K562 (cell line): ENCODE measurements at regions of chr1 and their contacts with region 1.

Region 1: DNA sequence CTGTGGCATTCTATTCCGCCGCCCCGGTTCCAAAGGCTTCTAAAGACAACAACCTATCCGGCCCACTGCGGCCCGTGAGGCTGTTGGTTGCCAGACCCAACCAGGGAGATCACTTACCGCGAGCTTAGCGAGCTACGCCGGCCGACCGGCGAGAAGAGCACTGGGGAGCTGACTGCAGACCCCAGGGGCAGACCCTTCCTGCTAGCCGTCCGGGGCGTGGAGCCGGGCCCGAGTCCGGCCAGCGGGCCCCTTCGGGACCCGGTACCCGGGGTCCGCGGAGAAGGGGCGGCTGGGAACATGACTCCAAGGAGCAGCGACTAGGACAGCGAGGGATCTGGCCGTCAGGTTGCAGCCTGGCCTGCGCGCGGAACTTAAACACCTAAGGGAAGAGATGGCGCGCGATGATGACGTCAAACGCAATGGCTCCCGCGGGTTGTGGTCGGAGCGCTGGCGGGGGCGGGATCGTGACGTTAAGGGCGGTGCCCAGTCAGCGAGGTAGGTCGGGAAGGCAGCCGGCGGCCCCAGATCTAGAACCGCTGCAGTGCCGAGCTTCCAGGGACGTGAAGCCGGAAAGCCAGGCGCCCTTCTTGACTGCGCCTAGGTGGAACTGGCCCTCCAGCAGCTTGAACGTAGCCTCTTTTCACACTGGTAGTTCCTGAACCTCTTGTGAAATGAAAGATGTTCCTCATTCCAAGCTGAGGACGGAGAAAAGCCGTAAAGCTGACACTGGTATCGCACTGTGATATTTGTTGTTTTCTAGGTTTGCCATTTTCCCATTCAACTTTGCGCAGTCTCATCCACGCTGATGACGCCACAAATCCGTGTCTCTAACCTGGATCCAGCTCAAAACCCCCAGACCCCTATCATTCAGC is at the start of gene NUP133:
- DNase-seq: peak; percentile 98 to 100 (median 98)
- ATAC-seq: peak; percentile 96
- H3K4me3 ChIP-seq: peak within 1 kb of the TSS; percentile 96
- H3K27ac ChIP-seq: peak within 1 kb of the TSS; percentile 97
- H3K4me1 ChIP-seq: peaks cover 6 to 14% of the 10 kb centered on the region in 2 experiments; a peak in 3 of 5 replicates
- H3K27me3 ChIP-seq: no peaks in the 10 kb centered on the region
- CTCF ChIP-seq: no peak
- EP300 ChIP-seq: no peak
- POLR2A ChIP-seq: peak; percentile 99
- RAD21 ChIP-seq: no peak
- polyA plus RNA-seq, gene NUP133: 21.7 to 35.0 TPM

Region 2: DNA sequence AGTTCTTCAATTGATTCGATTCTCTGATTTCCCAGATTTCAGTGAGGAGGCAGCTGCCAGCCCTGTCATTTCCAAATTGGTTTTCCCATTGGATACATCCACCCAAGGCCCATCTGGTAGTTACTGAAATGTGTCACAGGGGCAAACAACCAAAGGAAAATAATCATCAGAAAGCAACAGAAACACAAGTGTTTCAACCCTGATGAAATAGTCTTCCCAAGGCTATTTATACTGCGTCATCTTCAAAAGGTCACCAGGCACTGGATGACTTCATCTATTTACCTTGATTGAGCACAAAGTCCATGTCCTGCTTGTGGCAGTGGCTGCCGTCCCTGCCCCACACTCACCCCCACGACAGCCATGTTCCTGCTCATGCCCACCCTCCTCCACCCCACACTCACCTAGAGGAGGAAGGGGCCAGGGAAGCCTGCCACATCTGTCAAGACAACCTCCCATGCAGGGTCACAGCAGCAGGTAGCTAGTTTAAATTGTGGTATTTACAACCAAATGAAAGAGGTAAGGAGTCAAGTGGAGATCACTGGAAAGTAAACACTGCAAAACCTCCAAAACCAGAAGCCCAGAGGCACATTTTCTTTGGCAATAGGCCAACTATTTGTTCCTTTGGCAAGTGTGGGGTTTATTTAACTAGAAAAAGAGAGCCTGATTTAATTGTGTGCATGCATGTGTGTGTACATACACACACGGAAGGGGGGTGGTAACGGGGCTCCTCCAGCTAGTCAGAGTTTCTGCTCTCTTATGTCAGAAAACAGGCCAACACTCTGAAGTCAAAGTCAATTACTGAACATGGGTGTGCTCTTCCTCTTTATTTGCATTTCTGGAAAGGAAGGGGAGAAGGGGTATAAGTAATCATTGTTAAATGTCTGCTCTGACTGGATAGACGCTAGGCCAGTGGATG is 286.8 kb before region 1 on chr1:
- CTCF ChIA-PET with region 1: no interaction called
- POLR2A ChIA-PET with region 1: no interaction called
- in situ Hi-C with region 1: no loop called
- intact Hi-C with region 1: no loop called
- DNase-seq: no peak
- ATAC-seq: no peak
- H3K4me3 ChIP-seq: no peak overlapping the region
- H3K27ac ChIP-seq: no peak overlapping the region
- H3K4me1 ChIP-seq: no peaks in the 10 kb centered on the region
- H3K27me3 ChIP-seq: peaks cover 9 to 26% of the 10 kb centered on the region in 2 experiments
- CTCF ChIP-seq: no peak
- EP300 ChIP-seq: no peak
- POLR2A ChIP-seq: no peak
- RAD21 ChIP-seq: no peak

Region 3: DNA sequence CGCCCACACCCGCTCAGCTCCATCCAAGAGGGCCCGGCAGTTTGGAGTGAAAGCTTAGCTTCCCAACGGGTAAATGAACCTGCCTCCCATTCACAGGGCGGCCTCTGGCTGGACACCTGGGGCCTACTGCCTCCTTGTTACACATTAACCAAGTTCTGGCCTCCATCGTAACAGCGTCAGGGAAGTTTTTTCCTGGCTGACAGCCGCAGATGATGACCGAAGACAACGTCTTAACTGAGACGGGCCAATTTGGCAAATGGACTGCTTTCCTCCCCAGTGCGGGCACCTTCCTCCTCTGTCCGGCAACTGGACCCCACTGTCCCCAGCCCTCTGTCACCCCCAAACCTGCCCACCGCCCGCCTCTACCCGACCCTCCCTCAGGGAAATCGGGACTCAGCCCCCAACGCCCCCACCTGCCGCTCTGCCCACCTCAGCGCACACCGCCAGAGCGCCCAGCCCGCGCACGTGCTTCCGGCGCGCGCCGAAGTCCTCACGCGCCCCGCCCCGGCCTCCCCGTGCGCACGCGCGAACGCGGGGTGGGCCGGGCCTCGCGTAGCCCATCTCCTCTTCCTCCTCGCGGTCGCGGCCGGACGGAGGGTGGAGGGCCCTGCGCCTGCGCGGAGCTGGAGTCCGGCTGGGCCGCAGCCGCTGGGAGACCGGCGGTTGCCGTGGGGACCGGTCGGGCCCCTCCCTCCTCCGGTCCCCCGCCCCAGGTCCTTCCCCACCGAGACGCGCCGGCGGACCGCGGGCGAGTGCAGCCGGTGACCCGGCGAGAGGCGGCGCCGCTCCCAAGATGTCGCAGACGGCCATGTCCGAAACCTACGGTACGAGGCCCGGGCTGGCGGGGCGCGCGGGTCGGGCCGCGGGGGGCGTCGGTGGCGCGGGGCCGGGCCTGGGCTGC is 237.4 kb before region 1 on chr1 and contains the start of gene RAB4A:
- CTCF ChIA-PET with region 1: no interaction called
- POLR2A ChIA-PET with region 1: interaction called, 3 read pairs
- in situ Hi-C with region 1: no loop called
- intact Hi-C with region 1: loop called (anchors 5 kb)
- DNase-seq: peak; percentile 96 to 100 (median 100)
- ATAC-seq: peak; percentile 96
- H3K4me3 ChIP-seq: peak within 1 kb of the TSS; percentile 78
- H3K27ac ChIP-seq: peak within 1 kb of the TSS; percentile 43
- H3K4me1 ChIP-seq: peaks cover 20 to 41% of the 10 kb centered on the region in 2 experiments; a peak in 4 of 5 replicates
- H3K27me3 ChIP-seq: no peaks in the 10 kb centered on the region; a peak in 1 of 5 replicates
- CTCF ChIP-seq: no peak
- EP300 ChIP-seq: no peak
- POLR2A ChIP-seq: peak; percentile 74
- RAD21 ChIP-seq: 0 out of 4 replicates have a peak, but pooled peaks of 1 of the 2 experiments have one; percentile 5
- polyA plus RNA-seq, gene RAB4A: 8.3 to 9.7 TPM

Region 4: GRCh38 chr1:229495782-229496181 is 12.4 kb before region 1 on chr1:
- CTCF ChIA-PET with region 1: no interaction called
- POLR2A ChIA-PET with region 1: interaction called, 45 read pairs
- in situ Hi-C with region 1: no loop called
- intact Hi-C with region 1: no loop called
- DNase-seq: no peak
- ATAC-seq: no peak
- H3K4me3 ChIP-seq: no peak overlapping the region
- H3K27ac ChIP-seq: no peak overlapping the region
- H3K4me1 ChIP-seq: no peaks in the 10 kb centered on the region
- H3K27me3 ChIP-seq: no peaks in the 10 kb centered on the region
- CTCF ChIP-seq: no peak
- EP300 ChIP-seq: no peak
- POLR2A ChIP-seq: no peak
- RAD21 ChIP-seq: no peak

Region 5: GRCh38 chr1:229535230-229535629 is 27.0 kb after region 1 on chr1:
- CTCF ChIA-PET with region 1: no interaction called
- POLR2A ChIA-PET with region 1: interaction called, 10 read pairs
- in situ Hi-C with region 1: no loop called
- intact Hi-C with region 1: no loop called
- DNase-seq: no peak
- ATAC-seq: no peak
- H3K4me3 ChIP-seq: no peak overlapping the region
- H3K27ac ChIP-seq: no peak overlapping the region
- H3K4me1 ChIP-seq: no peaks in the 10 kb centered on the region
- H3K27me3 ChIP-seq: no peaks in the 10 kb centered on the region
- CTCF ChIP-seq: no peak
- EP300 ChIP-seq: no peak
- POLR2A ChIP-seq: no peak
- RAD21 ChIP-seq: no peak

Region 6: GRCh38 chr1:229625915-229626831 is 118.0 kb after region 1 on chr1 and contains the starts of genes TAF5L and URB2:
- CTCF ChIA-PET with region 1: no interaction called
- POLR2A ChIA-PET with region 1: no interaction called
- in situ Hi-C with region 1: no loop called
- intact Hi-C with region 1: loop called (anchors 2 kb)
- DNase-seq: peak; percentile 92 to 97 (median 94)
- ATAC-seq: peak; percentile 95
- H3K4me3 ChIP-seq: peak within 1 kb of the TSS; percentile 79
- H3K27ac ChIP-seq: peak within 1 kb of the TSS; percentile 73
- H3K4me1 ChIP-seq: peaks cover 15% of the 10 kb centered on the region in 2 experiments; a peak in 4 of 5 replicates
- H3K27me3 ChIP-seq: no peaks in the 10 kb centered on the region
- CTCF ChIP-seq: 0 out of 6 replicates have a peak, but pooled peaks of 1 of the 3 experiments have one; percentile 3
- EP300 ChIP-seq: peak; percentile 32; the same call in 1 of the 2 replicates
- POLR2A ChIP-seq: peak; percentile 84
- RAD21 ChIP-seq: no peak
- polyA plus RNA-seq, gene TAF5L: 2.2 to 3.2 TPM
- polyA plus RNA-seq, gene URB2: 2.8 to 3.8 TPM